Lower lobe of right lung (tissue), 2 donors: ENCODE measurements at regions of chr3 and their contacts with region 1.

Region 1: GRCh38 chr3:69161587-69162307 is 39.4 kb upstream of the LMOD3 start:
- DNase-seq: no peak
- ATAC-seq: peak; percentile 83
- H3K4me3 ChIP-seq: no peak overlapping the region
- H3K27ac ChIP-seq: no peak overlapping the region
- H3K4me1 ChIP-seq: no peaks in the 10 kb centered on the region
- H3K27me3 ChIP-seq: no peaks in the 10 kb centered on the region
- CTCF ChIP-seq: peak; percentile 96

Region 2: GRCh38 chr3:69294014-69294775 is 132.4 kb after region 1 on chr3:
- intact Hi-C with region 1: no loop called
- DNase-seq: no peak
- ATAC-seq: peak in 1 of 2 donors; percentile 13
- H3K4me3 ChIP-seq: no peak overlapping the region
- H3K27ac ChIP-seq: no peak overlapping the region
- H3K4me1 ChIP-seq: peaks cover 10% of the 10 kb centered on the region
- H3K27me3 ChIP-seq: no peaks in the 10 kb centered on the region
- CTCF ChIP-seq: no peak

Region 3: GRCh38 chr3:69306239-69307185 is 144.8 kb after region 1 on chr3:
- intact Hi-C with region 1: loop called (anchors 5 kb)
- DNase-seq: peak; percentile 72
- ATAC-seq: peak; percentile 95 to 98
- H3K4me3 ChIP-seq: no peak overlapping the region
- H3K27ac ChIP-seq: no peak overlapping the region
- H3K4me1 ChIP-seq: peaks cover 9% of the 10 kb centered on the region
- H3K27me3 ChIP-seq: no peaks in the 10 kb centered on the region
- CTCF ChIP-seq: peak; percentile 94

Region 4: GRCh38 chr3:69425261-69425660 is 263.5 kb after region 1 on chr3:
- intact Hi-C with region 1: loop called (anchors 5 kb)
- DNase-seq: no peak
- ATAC-seq: peak; percentile 75 to 84
- H3K4me3 ChIP-seq: no peak overlapping the region
- H3K27ac ChIP-seq: no peak overlapping the region
- H3K4me1 ChIP-seq: peaks cover 21% of the 10 kb centered on the region
- H3K27me3 ChIP-seq: no peaks in the 10 kb centered on the region
- CTCF ChIP-seq: peak; percentile 64

Region 5: DNA sequence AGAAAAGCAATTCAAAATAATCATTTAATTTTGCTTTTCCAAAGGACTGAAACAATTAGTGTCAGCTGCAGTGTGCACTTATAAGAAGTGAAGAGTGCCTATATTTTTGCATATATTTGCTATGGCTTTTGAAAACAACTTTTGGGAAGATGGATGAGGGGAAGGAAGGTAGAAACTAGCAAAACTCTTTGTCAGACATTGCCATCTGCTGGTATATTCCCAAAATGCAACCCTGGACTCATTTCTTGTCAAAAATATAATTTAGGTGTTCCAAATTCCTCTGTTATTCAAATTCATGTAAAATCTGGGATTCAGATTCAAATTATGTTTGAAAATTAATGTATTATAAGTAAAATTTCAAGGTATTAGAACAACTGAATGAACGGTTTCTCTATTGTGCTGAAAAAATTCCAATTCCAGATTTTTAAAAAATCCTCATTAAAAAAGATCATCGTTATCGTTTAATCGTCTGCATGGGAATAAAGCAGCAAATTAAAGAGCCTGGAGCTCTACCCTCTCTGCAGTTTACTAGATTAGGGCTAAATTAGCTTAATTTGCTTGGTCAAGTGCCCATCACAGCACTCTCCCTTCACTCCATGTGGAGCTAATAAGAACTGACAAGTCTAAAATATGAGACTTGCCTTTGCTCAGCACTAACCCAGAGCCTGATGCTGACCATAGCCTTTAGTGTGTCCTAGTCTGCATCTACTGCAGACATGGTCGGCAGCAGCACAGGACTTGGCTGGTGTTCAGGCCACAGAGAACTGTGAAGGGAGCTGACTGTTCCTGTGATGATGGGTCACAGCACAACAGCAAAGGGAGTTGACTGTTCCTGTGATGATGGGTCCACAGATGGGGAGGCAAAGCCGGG is 509.6 kb after region 1 on chr3:
- intact Hi-C with region 1: loop called (anchors 10 kb)
- DNase-seq: no peak
- ATAC-seq: peak in 1 of 2 donors; percentile 15
- H3K4me3 ChIP-seq: no peak overlapping the region
- H3K27ac ChIP-seq: no peak overlapping the region
- H3K4me1 ChIP-seq: no peaks in the 10 kb centered on the region
- H3K27me3 ChIP-seq: no peaks in the 10 kb centered on the region
- CTCF ChIP-seq: peak; percentile 81